Activated T-helper 1 cell treated with anti-CD3 and anti-CD28 coated beads, Interleukin-12 subunit alpha, Interleukin-12 subunit beta, Interleukin-2, Interleukin-4 antibody, amounts not matched to agents 30 ng/mL and 10 ng/mL and 1 ng/mL, durations not matched to agents 14 hours and 24 hours and 36 hours (primary cell): ENCODE measurements at regions of chr12 and their contacts with region 1.

Region 1: GRCh38 chr12:92297932-92298696 is 152.5 kb upstream of the BTG1 start:
- DNase-seq: peak; percentile 7
- H3K4me3 Mint-ChIP-seq: peak overlapping the region; percentile 49
- H3K27ac Mint-ChIP-seq: peak overlapping the region; percentile 88
- H3K4me1 Mint-ChIP-seq: no peaks in the 10 kb centered on the region
- H3K27me3 Mint-ChIP-seq: no peaks in the 10 kb centered on the region

Region 2: GRCh38 chr12:91877022-91877421 is 421.1 kb before region 1 on chr12:
- intact Hi-C with region 1: no loop called
- DNase-seq: peak; percentile 81
- H3K4me3 Mint-ChIP-seq: peak overlapping the region; percentile 66
- H3K27ac Mint-ChIP-seq: peak overlapping the region; percentile 95
- H3K4me1 Mint-ChIP-seq: peaks cover 66% of the 10 kb centered on the region
- H3K27me3 Mint-ChIP-seq: no peaks in the 10 kb centered on the region

Region 3: DNA sequence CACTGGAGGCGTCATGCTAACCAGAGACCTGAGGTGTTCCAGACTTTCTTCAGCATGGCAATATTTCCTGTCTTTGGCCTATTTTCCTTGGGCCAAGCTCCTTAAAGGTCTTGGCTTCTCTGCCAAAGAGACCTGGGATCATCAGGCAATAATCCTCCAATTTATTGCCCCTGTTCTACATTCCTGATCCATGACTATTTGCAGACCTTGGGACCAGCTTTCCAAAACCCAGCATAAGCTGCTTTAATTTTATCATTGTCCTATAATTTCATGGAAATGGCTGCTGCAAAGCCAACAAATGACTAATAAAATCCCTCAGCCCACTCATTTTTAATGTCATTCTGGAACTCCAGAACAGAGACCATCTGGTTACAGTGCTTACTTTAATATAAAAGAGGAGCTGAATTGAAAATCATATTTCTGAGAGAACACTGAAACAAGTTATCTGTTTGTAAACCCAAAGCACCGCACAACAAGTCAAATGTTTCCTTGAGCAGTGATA is 14.4 kb after region 1 on chr12:
- intact Hi-C with region 1: no loop called
- DNase-seq: no peak
- H3K4me3 Mint-ChIP-seq: no peak overlapping the region
- H3K27ac Mint-ChIP-seq: no peak overlapping the region
- H3K4me1 Mint-ChIP-seq: peaks cover 9% of the 10 kb centered on the region
- H3K27me3 Mint-ChIP-seq: peaks cover 2% of the 10 kb centered on the region

Region 4: GRCh38 chr12:92363295-92364146 is 65.4 kb after region 1 on chr12:
- intact Hi-C with region 1: loop called (anchors 5 kb)
- DNase-seq: no peak
- H3K4me3 Mint-ChIP-seq: peak overlapping the region; percentile 64
- H3K27ac Mint-ChIP-seq: peak overlapping the region; percentile 77
- H3K4me1 Mint-ChIP-seq: peaks cover 59% of the 10 kb centered on the region
- H3K27me3 Mint-ChIP-seq: no peaks in the 10 kb centered on the region